SK-N-SH (cell line): ENCODE measurements at regions of chr3 and their contacts with region 1.

Region 1: DNA sequence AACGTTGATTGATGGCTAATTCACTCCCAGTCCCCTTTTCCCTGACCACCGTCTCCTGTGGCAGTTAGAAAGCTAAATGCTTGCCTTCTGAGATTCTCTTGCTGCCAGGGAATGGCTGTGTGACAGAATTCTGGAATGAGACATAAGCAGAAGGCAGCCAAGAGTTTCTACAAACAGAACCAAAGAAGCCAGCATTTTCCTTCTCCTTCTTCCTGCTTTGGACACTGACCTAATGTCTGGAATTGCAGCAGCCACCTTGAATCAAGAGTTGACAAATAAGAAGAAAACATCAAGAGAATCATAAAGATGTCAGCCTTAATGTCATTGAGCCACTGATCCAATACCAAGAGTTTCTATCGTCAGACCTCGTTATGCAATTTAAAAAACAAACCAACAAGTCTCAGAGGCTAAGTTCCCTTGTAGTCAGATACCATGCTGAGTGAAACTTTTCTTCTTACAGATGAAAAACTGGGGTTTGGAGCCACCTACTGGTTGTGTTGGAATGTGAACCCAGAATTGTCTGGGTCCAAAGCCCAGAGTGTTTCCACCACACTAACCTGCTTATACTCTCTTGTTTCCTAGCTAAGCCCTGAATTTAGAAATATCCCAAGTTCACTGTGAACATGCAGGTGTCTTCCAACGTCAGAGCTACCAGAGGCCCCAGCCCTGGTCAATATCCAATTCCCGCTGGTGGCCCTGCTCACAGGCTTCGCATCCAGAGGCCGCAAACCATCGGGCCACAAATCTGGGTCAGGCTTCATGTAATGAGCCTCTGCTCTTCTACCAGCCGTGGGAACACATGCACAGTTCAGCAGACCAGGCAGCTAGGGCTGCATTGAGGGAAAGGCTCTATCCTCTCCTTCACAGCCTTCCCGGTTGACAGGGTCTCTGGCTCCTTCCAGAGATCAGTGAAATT is 42.5 kb downstream of the MCF2L2 start:
- DNase-seq: peak; percentile 47
- H3K4me3 ChIP-seq: no peak overlapping the region; a peak in 1 of 4 replicates
- H3K27ac ChIP-seq: peak overlapping the region in 1 of 2 experiments; percentile 16; a peak in 1 of 4 replicates
- H3K4me1 ChIP-seq: peaks cover 2 to 7% of the 10 kb centered on the region in 2 experiments; a peak in 2 of 4 replicates
- H3K27me3 ChIP-seq: no peaks in the 10 kb centered on the region
- CTCF ChIP-seq: peak; percentile 80
- EP300 ChIP-seq: no peak
- RAD21 ChIP-seq: peak; percentile 88

Region 2: DNA sequence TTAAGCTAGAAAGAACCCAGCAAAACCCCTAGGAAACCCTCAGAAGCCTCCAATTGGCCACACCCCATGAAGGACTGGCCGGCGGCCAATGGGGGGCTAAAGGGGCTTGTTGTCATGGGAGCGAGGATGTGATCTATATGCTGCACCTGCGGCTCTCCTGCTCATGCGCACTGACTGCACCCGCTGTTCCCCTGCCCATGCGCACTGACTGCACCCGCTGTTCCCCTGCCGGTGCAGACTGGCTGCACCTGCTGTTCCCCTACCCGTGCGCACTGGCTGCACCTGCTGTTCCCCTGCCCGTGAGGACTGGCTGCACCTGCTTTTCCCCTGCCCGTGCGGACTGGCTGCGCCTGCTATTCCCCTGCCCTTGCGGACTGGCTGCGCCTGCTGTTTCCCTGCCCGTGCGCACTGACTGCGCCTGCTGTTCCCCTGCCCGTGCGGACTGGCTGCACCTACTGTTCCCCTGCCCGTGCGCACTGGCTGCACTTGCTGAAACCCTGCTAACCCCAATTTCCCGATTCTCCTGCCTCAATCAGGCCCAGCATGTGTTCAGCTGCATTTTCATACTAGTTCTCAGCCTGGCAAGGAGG is 269.8 kb before region 1 on chr3:
- CTCF ChIA-PET with region 1: interaction called, 143 read pairs
- POLR2A ChIA-PET with region 1: no interaction called
- DNase-seq: peak; percentile 85
- H3K4me3 ChIP-seq: peak overlapping the region in 1 of 2 experiments; percentile 55; a peak in 2 of 4 replicates
- H3K27ac ChIP-seq: no peak overlapping the region
- H3K4me1 ChIP-seq: peaks cover 0 to 21% of the 10 kb centered on the region in 2 experiments; a peak in 1 of 4 replicates
- H3K27me3 ChIP-seq: peaks cover 21% of the 10 kb centered on the region
- CTCF ChIP-seq: no peak
- EP300 ChIP-seq: no peak
- RAD21 ChIP-seq: no peak

Region 3: GRCh38 chr3:183131735-183132134 is 254.2 kb before region 1 on chr3:
- CTCF ChIA-PET with region 1: interaction called, 143 read pairs
- POLR2A ChIA-PET with region 1: no interaction called
- DNase-seq: no peak
- H3K4me3 ChIP-seq: peak overlapping the region in 1 of 2 experiments; percentile 13; a peak in 1 of 4 replicates
- H3K27ac ChIP-seq: peak overlapping the region in 1 of 2 experiments; percentile 62; a peak in 2 of 4 replicates
- H3K4me1 ChIP-seq: peaks cover 0 to 12% of the 10 kb centered on the region in 2 experiments; a peak in 1 of 4 replicates
- H3K27me3 ChIP-seq: no peaks in the 10 kb centered on the region
- CTCF ChIP-seq: no peak
- EP300 ChIP-seq: no peak; a peak in 1 of 4 replicates
- RAD21 ChIP-seq: no peak

Region 4: DNA sequence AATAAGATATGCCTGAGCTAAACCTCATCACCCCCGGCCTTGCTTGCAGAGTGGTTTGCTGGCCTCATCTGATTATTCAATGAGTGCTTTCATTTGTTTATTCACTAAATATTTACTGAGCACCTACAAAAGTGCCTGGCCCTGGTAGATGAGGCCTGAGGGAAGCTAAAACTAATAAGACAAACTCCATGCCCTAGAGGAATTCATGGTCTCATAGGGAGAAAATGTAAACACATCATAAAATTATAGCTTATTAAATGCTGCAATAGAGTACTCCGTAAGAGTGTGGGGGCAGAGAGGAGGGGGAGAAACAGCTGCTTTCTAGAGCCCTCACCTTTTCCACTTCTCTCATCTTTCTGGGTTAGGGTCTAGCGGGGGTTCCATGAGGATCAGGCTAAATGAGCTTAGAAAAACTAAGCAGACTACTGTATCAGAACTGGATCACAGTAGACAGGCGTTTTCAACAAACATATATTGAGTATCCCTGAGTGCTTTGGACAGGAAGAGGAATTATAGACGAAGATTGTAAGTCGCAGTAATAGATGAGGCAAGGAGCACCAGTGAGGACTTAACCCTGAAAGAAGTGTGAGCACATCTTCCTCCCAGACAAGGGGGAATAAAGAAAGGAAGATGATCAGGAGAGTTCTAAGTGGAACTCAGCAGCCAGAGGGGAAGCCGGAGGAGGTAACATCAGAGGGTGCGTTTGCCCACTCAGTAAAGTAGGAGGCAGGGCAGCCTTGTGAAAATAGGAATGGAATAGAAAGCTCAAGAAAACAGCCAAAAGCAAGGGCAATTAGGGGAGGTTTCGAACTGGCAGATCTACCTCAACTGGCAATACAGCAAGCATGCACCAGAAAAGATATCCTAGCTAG is 191.9 kb before region 1 on chr3:
- CTCF ChIA-PET with region 1: interaction called, 361 read pairs
- POLR2A ChIA-PET with region 1: no interaction called
- DNase-seq: no peak
- H3K4me3 ChIP-seq: no peak overlapping the region
- H3K27ac ChIP-seq: no peak overlapping the region
- H3K4me1 ChIP-seq: no peaks in the 10 kb centered on the region
- H3K27me3 ChIP-seq: no peaks in the 10 kb centered on the region
- CTCF ChIP-seq: no peak
- EP300 ChIP-seq: no peak
- RAD21 ChIP-seq: no peak

Region 5: GRCh38 chr3:183369117-183369516 is 16.8 kb before region 1 on chr3:
- CTCF ChIA-PET with region 1: interaction called, 32 read pairs
- POLR2A ChIA-PET with region 1: no interaction called
- DNase-seq: no peak
- H3K4me3 ChIP-seq: no peak overlapping the region
- H3K27ac ChIP-seq: no peak overlapping the region
- H3K4me1 ChIP-seq: 0 out of 4 replicates have a peak, but pooled peaks cover 0 to 6% of the 10 kb centered on the region in 2 experiments
- H3K27me3 ChIP-seq: no peaks in the 10 kb centered on the region
- CTCF ChIP-seq: no peak
- EP300 ChIP-seq: no peak
- RAD21 ChIP-seq: no peak